ENCODE measurements at regions of chr1 and their contacts with region 1.

Region 1: GRCh38 chr1:89538361-89538760 is 13.7 kb downstream of the LRRC8B start:
- DNase-seq: no peak
- ATAC-seq: peak in 5 of 8 donors; percentile 54 to 77 (median 66)
- H3K4me3 ChIP-seq: no peak overlapping the region
- H3K27ac ChIP-seq: peak overlapping the region in 5 of 10 donors; percentile 30 to 51 (median 42)
- H3K4me1 ChIP-seq: peaks cover 0 to 23% (median 8%) of the 10 kb centered on the region in 9 donors
- H3K27me3 ChIP-seq: no peaks in the 10 kb centered on the region
- CTCF ChIP-seq: no peak

Region 2: GRCh38 chr1:89598450-89599331 is 60.3 kb after region 1 on chr1:
- intact Hi-C with region 1: loop called in 1 of 10 experiments (anchors 10 kb)
- DNase-seq: no peak
- ATAC-seq: peak in 5 of 8 donors; percentile 51 to 77 (median 74)
- H3K4me3 ChIP-seq: no peak overlapping the region
- H3K27ac ChIP-seq: no peak overlapping the region
- H3K4me1 ChIP-seq: peaks cover 0 to 19% (median 13%) of the 10 kb centered on the region in 9 donors
- H3K27me3 ChIP-seq: no peaks in the 10 kb centered on the region
- CTCF ChIP-seq: peak; percentile 43 to 81 (median 71)